Left cardiac atrium (tissue), 4 donors: ENCODE measurements at regions of chr11 and their contacts with region 1.

Region 1: DNA sequence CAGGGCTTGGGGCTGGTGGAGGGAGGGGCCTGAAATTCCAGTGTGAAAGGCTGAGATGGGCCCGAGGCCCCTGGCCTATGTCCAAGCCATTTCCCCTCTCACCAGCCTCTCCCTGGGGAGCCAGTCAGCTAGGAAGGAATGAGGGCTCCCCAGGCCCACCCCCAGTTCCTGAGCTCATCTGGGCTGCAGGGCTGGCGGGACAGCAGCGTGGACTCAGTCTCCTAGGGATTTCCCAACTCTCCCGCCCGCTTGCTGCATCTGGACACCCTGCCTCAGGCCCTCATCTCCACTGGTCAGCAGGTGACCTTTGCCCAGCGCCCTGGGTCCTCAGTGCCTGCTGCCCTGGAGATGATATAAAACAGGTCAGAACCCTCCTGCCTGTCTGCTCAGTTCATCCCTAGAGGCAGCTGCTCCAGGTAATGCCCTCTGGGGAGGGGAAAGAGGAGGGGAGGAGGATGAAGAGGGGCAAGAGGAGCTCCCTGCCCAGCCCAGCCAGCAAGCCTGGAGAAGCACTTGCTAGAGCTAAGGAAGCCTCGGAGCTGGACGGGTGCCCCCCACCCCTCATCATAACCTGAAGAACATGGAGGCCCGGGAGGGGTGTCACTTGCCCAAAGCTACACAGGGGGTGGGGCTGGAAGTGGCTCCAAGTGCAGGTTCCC is at the start of gene APOC3:
- DNase-seq: no peak
- ATAC-seq: peak in 1 of 2 donors; percentile 66
- total RNA-seq, gene APOC3: not detected

Region 2: GRCh38 chr11:116787786-116788486 is 41.7 kb before region 1 on chr11 and contains the start of gene ZPR1:
- intact Hi-C with region 1: loop called in 1 of 2 experiments (anchors 5 kb)
- DNase-seq: peak; percentile 88
- ATAC-seq: peak; percentile 88 to 91
- total RNA-seq, gene ZPR1: 23.0 to 33.9 TPM